Endothelial cell of umbilical vein (primary cell): ENCODE measurements at regions of chr18 and their contacts with region 1.

Region 1: DNA sequence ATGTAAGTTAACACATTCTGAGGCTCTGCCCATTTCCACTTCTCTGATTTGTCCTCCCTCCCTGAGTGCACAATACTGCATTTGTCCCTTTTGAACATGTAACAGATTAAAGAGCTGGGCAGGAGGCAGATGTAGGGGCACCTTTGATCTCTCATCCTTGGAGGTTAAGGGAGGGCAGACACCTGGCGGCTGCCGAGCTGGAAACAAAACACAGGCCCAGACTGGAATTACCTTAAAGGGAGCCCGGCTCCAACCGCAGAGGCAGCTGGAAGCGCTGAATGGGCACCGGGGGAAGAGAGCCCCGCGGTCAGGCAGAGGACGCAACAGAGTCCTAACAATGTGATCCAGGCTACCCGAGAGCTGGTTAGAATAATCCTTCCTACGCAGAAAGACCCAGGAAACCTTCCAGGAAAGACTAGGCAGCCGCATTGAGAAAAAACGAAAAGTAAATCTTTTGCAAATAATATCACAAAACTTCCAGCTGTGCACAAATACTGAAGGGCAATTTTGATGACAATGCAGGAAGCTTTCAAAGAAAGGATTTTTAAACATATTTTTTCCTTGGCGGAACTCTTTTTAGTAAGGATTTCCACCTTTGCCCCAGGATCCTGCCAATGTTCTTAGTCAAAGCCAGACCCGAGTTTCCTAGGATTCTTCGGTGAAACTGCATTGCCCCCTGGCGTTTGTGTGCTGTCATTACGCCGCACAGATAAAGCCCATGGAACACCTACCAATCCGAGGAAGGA is 216.0 kb downstream of the TGIF1 start:
- DNase-seq: peak; percentile 90
- H3K4me3 ChIP-seq: peak overlapping the region in 1 of 3 experiments; percentile 34
- H3K27ac ChIP-seq: peak overlapping the region; percentile 90
- H3K4me1 ChIP-seq: peaks cover 16% of the 10 kb centered on the region
- H3K27me3 ChIP-seq: no peaks in the 10 kb centered on the region
- CTCF ChIP-seq: peak; percentile 86 to 91
- POLR2A ChIP-seq: no peak

Region 2: DNA sequence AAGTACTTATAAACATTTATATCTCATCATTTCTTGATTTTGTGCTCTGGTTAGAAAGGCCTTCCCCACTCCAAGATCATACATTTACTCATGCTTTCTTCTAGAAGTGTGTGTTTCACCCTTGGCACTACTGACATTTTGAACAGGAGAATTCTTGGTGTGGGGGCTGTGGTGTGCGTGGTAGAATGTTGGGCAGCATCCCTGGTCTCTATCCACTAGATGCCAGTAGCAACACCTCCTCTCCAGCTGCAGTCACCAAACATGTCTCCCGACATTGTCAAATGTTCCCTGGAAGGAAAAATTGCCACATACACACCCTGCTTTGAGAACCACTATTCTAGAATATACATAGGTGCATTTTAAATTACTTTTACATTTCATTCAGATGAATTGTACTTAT is 224.7 kb before region 1 on chr18:
- CTCF ChIA-PET with region 1: interaction called, 17 read pairs
- POLR2A ChIA-PET with region 1: no interaction called
- dilution Hi-C with region 1: no loop called
- intact Hi-C with region 1: no loop called
- DNase-seq: peak; percentile 50
- H3K4me3 ChIP-seq: no peak overlapping the region
- H3K27ac ChIP-seq: no peak overlapping the region
- H3K4me1 ChIP-seq: peaks cover under 1% of the 10 kb centered on the region
- H3K27me3 ChIP-seq: peaks cover 0 to 2% of the 10 kb centered on the region in 2 experiments
- CTCF ChIP-seq: peak in 1 of 2 donors; percentile 45
- POLR2A ChIP-seq: no peak

Region 3: DNA sequence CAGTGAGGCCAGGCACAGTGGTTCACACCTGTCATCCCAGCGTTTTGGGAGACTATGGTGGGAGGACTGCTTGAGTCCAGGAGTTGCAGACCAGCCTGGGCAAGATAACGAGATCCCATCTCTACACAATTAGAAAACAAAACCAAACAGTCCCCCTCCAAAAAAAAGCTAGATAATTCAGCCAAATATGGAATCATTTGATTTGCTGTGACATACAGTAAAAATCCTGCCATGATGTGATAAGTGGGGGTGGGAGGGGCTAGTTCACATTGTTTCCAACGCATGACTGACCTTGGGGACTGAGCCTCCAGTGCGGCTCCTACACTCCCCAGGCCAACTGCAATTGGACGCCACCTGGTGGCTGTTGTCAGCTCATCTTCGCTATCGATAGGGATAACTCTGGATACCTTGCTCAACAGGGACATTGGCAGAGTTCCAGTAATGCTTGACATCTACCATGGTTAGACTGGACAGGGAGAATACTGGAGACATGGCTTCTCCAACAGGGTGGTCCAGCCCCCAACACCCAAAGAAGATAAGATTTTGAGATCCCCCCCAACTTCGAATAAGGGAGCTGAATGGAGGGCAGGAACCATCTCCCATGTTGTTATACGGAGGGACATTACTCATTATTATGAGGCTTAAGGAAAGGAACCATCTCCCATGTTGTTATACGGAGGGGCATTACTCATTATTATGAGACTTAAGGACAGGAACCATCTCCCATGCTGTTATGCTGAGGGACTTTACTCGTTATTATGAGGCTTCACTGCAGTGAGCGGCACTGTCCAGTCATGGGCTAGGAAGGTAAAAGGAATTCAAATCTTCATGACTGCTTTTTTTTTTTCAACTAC is 80.1 kb before region 1 on chr18:
- CTCF ChIA-PET with region 1: interaction called, 53 read pairs
- POLR2A ChIA-PET with region 1: no interaction called
- dilution Hi-C with region 1: no loop called
- intact Hi-C with region 1: no loop called
- DNase-seq: peak; percentile 81
- H3K4me3 ChIP-seq: no peak overlapping the region
- H3K27ac ChIP-seq: no peak overlapping the region
- H3K4me1 ChIP-seq: peaks cover 2% of the 10 kb centered on the region
- H3K27me3 ChIP-seq: no peaks in the 10 kb centered on the region
- CTCF ChIP-seq: peak; percentile 75 to 78
- POLR2A ChIP-seq: no peak

Region 4: GRCh38 chr18:3652380-3653262 is 13.3 kb before region 1 on chr18:
- CTCF ChIA-PET with region 1: interaction called, 34 read pairs
- POLR2A ChIA-PET with region 1: no interaction called
- dilution Hi-C with region 1: no loop called
- intact Hi-C with region 1: no loop called
- DNase-seq: peak; percentile 97
- H3K4me3 ChIP-seq: peak overlapping the region in 1 of 3 experiments; percentile 42
- H3K27ac ChIP-seq: peak overlapping the region; percentile 83
- H3K4me1 ChIP-seq: peaks cover 46% of the 10 kb centered on the region
- H3K27me3 ChIP-seq: no peaks in the 10 kb centered on the region
- CTCF ChIP-seq: peak in 1 of 2 donors; percentile 4
- POLR2A ChIP-seq: no peak

Region 5: DNA sequence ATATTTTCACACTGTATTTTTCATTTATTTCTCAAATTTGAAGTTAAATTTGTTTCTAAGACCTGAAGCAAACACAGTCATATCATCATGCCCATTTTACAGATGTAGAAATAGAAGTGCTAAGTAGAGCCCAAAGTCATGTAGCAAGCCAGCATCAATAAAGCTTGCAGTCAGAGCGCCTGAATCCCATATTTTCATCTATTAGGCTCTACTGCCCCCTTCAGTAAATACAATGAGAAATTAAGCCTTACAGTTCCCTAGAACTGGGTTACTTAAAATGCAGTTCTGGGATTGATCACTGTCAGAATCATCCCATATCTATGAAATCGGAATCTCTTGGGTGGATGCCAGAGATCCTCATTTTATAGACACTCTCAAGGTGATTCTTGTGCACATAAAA is 203.9 kb after region 1 on chr18:
- CTCF ChIA-PET with region 1: interaction called, 110 read pairs
- POLR2A ChIA-PET with region 1: no interaction called
- dilution Hi-C with region 1: no loop called
- intact Hi-C with region 1: loop called (anchors 1 kb)
- DNase-seq: peak; percentile 68
- H3K4me3 ChIP-seq: no peak overlapping the region
- H3K27ac ChIP-seq: no peak overlapping the region
- H3K4me1 ChIP-seq: no peaks in the 10 kb centered on the region
- H3K27me3 ChIP-seq: peaks cover 0 to 14% of the 10 kb centered on the region in 2 experiments
- CTCF ChIP-seq: peak; percentile 28 to 39
- POLR2A ChIP-seq: no peak

Region 6: GRCh38 chr18:5142859-5143258 is 1476.9 kb after region 1 on chr18:
- CTCF ChIA-PET with region 1: no interaction called
- POLR2A ChIA-PET with region 1: no interaction called
- dilution Hi-C with region 1: no loop called
- intact Hi-C with region 1: no loop called
- DNase-seq: no peak
- H3K4me3 ChIP-seq: no peak overlapping the region
- H3K27ac ChIP-seq: no peak overlapping the region
- H3K4me1 ChIP-seq: no peaks in the 10 kb centered on the region
- H3K27me3 ChIP-seq: no peaks in the 10 kb centered on the region
- CTCF ChIP-seq: no peak
- POLR2A ChIP-seq: no peak